Activated T-helper 1 cell treated with anti-CD3 and anti-CD28 coated beads, Interleukin-12 subunit alpha, Interleukin-12 subunit beta, Interleukin-2, Interleukin-4 antibody, amounts not matched to agents 30 ng/mL and 10 ng/mL and 1 ng/mL, durations not matched to agents 14 hours and 24 hours and 36 hours (primary cell): ENCODE measurements at regions of chr15 and their contacts with region 1.

Region 1: GRCh38 chr15:85430406-85431204 is 50.2 kb downstream of the AKAP13 start:
- DNase-seq: no peak
- H3K4me3 Mint-ChIP-seq: no peak overlapping the region
- H3K27ac Mint-ChIP-seq: peak overlapping the region; percentile 34
- H3K4me1 Mint-ChIP-seq: peaks cover 26% of the 10 kb centered on the region
- H3K27me3 Mint-ChIP-seq: no peaks in the 10 kb centered on the region

Region 2: GRCh38 chr15:85443593-85444087 is 13.0 kb after region 1 on chr15:
- intact Hi-C with region 1: loop called (anchors 1 kb)
- DNase-seq: no peak
- H3K4me3 Mint-ChIP-seq: peak overlapping the region; percentile 6
- H3K27ac Mint-ChIP-seq: peak overlapping the region; percentile 84
- H3K4me1 Mint-ChIP-seq: peaks cover 28% of the 10 kb centered on the region
- H3K27me3 Mint-ChIP-seq: peaks cover 2% of the 10 kb centered on the region

Region 3: DNA sequence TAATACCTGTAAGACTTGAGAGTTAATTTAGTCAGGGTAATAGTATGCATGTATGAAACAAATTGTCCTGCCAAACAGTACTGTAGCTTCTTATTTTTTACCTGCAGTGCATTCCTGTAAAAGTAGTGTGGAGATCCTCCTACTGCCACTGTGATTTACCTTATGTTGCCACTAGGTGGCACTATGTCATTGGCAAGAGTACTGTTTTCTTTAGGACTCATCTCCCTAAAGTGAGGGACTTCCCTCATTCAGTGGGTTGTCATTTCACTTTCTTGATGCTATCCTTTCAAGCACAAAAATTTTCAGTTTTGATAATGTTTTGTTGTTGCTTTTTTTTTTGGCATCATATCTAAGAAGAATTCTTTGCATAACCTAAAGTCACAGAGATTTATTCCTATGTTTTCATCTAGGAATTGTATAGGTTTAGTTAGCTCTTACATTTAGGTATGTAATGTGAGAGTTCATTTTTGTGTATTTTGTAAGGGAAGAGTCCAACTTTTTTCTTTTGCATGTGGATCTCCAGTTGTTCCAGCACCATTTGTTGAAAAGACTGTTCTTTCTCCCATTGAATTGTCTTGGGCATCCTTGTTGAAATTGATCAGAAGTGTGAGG is 55.5 kb after region 1 on chr15:
- intact Hi-C with region 1: no loop called
- DNase-seq: peak; percentile 54
- H3K4me3 Mint-ChIP-seq: no peak overlapping the region
- H3K27ac Mint-ChIP-seq: no peak overlapping the region
- H3K4me1 Mint-ChIP-seq: peaks cover 57% of the 10 kb centered on the region
- H3K27me3 Mint-ChIP-seq: no peaks in the 10 kb centered on the region